ENCODE measurements at regions of chr5 and their contacts with region 1.

Region 1: GRCh38 chr5:134345996-134346395 is 21.0 kb downstream of the CDKL3 start:
- DNase-seq: no peak
- H3K4me3 ChIP-seq: no peak overlapping the region
- H3K27ac ChIP-seq: no peak overlapping the region
- H3K4me1 ChIP-seq: no peaks in the 10 kb centered on the region
- H3K27me3 ChIP-seq: no peaks in the 10 kb centered on the region
- CTCF ChIP-seq: no peak
- POLR2A ChIP-seq: no peak

Region 2: DNA sequence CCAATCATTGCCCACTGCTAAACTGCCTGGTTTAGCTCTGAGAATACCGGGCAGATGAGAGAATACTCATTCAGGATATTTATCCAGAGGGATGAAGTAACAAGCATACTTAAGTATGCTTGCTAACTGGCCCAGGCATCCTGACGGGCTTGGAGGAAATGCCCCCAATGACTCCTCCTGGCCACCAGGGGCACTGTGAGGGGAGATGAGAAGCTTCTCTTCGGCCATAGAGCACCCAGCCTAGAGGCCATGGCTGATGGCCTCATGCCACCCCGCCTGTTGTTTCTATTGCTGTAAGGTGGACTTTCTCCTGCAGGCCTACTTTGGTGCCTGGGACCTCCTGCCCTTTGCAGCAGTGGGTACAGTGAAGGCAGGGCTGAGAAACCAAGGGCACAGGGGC is 599.2 kb before region 1 on chr5:
- intact Hi-C with region 1: no loop called
- DNase-seq: no peak
- H3K4me3 ChIP-seq: no peak overlapping the region
- H3K27ac ChIP-seq: no peak overlapping the region
- H3K4me1 ChIP-seq: peaks cover 0 to 6% (median 0%) of the 10 kb centered on the region in 6 donors
- H3K27me3 ChIP-seq: peaks cover 0 to 4% (median 0%) of the 10 kb centered on the region in 7 donors
- CTCF ChIP-seq: no peak
- POLR2A ChIP-seq: no peak

Region 3: GRCh38 chr5:134209477-134210240 is 136.3 kb before region 1 on chr5:
- intact Hi-C with region 1: loop called (anchors 10 kb)
- DNase-seq: no peak
- H3K4me3 ChIP-seq: no peak overlapping the region
- H3K27ac ChIP-seq: no peak overlapping the region
- H3K4me1 ChIP-seq: peaks cover 3 to 96% (median 53%) of the 10 kb centered on the region in 6 donors
- H3K27me3 ChIP-seq: no peaks in the 10 kb centered on the region
- CTCF ChIP-seq: no peak
- POLR2A ChIP-seq: no peak